Calu3 (cell line): ENCODE measurements at regions of chr1 and their contacts with region 1.

Region 1: DNA sequence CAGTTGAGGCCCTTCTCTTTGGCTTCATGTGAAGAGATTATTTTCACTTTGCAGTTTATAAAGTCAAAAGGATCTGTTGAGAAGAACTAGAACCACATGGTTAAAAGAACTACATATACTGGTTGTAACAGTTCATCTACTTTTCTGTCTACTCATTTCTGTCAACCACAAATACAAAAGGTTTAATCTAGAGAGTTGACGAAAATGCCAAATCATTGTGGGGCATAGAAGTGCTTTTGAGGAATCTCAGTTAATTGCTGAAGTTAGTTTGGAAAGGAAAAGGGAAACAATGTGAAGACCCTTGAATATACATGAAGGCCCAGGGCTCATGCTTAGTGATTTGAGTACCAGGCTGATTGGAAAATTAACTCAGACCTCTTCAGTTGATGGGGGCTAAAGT is 415.7 kb upstream of the ZP4 start:
- DNase-seq: no peak
- H3K4me3 Mint-ChIP-seq: no peak overlapping the region
- H3K27ac Mint-ChIP-seq: no peak overlapping the region
- H3K4me1 Mint-ChIP-seq: no peaks in the 10 kb centered on the region
- H3K27me3 Mint-ChIP-seq: no peaks in the 10 kb centered on the region
- CTCF ChIP-seq: no peak

Region 2: DNA sequence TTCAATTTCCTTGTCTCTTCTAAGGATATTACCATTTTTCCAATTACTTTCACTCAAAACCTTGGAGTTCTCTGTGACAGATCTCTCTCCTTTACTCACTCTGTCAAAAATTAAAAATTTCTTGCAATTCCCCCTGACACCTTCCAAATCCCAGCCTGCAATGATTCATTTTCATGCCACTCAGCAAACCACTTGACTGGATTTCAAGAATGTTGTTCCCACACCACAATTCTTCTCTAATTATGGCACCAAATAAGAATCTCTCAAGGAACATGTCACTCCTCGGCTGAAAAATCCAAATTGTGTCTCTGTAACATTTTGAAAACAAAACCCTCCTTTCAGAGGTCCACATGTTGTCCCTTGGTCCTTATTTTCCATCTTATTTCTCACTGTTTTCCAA is 23.3 kb after region 1 on chr1:
- CTCF ChIA-PET with region 1: no interaction called
- intact Hi-C with region 1: loop called (anchors 1 kb)
- DNase-seq: no peak
- H3K4me3 Mint-ChIP-seq: no peak overlapping the region
- H3K27ac Mint-ChIP-seq: no peak overlapping the region
- H3K4me1 Mint-ChIP-seq: no peaks in the 10 kb centered on the region
- H3K27me3 Mint-ChIP-seq: no peaks in the 10 kb centered on the region
- CTCF ChIP-seq: no peak